Gastrocnemius medialis (tissue), 4 donors: ENCODE measurements at regions of chr7 and their contacts with region 1.

Region 1: GRCh38 chr7:119935418-119936025 is 337.5 kb upstream of the KCND2 start:
- DNase-seq: no peak
- ATAC-seq: no peak
- H3K4me3 ChIP-seq: no peak overlapping the region
- H3K27ac ChIP-seq: no peak overlapping the region
- H3K4me1 ChIP-seq: no peaks in the 10 kb centered on the region
- H3K27me3 ChIP-seq: no peaks in the 10 kb centered on the region
- CTCF ChIP-seq: peak in 3 of 5 experiments; percentile 16 to 46 (median 25)
- POLR2A ChIP-seq: no peak

Region 2: DNA sequence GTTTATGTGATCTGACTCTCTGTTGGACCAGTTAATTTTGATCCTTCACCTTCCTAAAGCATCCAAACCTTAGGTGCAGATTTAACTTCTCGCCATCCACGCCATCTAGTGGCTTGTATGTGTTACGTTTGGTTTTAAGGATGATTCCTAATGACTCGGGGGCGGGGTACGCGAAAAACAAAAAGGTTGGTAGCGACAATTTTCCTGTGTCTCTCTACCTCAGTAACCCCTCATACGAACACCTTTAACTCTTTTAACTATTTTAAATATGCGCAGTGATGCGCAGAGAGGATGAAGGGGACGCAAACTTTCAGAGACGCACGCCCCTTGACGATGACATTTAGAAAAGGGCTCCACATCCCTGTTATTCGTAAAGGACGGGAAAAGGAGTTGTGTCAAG is 336.7 kb after region 1 on chr7:
- in situ Hi-C with region 1: loop called (anchors 5 to 25 kb)
- intact Hi-C with region 1: loop called (anchors 1 kb)
- DNase-seq: no peak
- ATAC-seq: peak; percentile 42 to 46
- H3K4me3 ChIP-seq: peak overlapping the region; percentile 25 to 53 (median 46)
- H3K27ac ChIP-seq: no peak overlapping the region
- H3K4me1 ChIP-seq: peaks cover 0 to 6% of the 10 kb centered on the region in 2 donors
- H3K27me3 ChIP-seq: peaks cover 0 to 10% (median 0%) of the 10 kb centered on the region in 3 donors
- CTCF ChIP-seq: peak; percentile 27 to 55 (median 40)
- POLR2A ChIP-seq: no peak